ENCODE measurements at regions of chr15 and their contacts with region 1.

Region 1: GRCh38 chr15:80970018-80970658 is 19.5 kb downstream of the MESD start:
- DNase-seq: no peak

Region 2: DNA sequence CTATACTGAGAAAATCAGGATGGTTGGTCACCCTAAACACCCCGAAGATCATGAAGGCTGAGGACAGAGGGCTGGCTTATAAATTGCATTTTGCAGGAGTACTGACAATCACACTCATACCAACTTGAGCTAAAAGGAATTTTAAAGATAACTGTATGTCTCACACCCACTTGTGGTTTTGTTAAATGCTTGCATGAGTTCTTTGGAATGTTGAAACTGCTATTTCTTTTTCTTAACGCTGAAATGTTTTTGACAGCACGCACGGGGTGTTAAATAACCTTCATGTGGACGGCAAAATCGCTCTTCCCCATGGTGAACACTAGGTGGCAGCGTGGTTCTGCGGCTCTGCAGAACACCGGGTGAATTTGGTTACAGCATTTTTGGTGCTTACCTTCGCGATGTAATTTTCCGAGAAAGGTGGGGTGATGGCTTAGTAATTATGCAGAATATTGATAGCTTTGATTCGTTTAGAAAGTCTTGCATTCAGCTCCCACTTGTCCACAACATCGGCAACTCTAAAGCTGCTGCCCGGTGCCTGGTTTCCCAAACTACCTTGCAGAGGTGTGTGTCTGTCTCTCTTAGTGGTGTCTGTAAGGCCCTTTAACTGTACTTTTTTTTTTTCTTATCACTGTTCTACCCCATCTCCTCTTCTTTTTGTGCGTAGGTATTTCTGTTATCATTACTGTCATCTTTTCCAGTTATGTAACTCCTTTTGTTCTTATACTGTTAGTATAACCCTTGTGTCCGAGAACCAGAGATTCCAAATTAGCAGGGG is 514.3 kb before region 1 on chr15:
- intact Hi-C with region 1: loop called (anchors 2 kb)
- DNase-seq: no peak

Measured in cardiac septum (tissue), 1 donor.